Endothelial cell of umbilical vein (primary cell): ENCODE measurements at regions of chr1 and their contacts with region 1.

Region 1: GRCh38 chr1:66996018-66996682 is 57.8 kb downstream of the SLC35D1 start:
- DNase-seq: peak; percentile 83
- H3K4me3 ChIP-seq: no peak overlapping the region
- H3K27ac ChIP-seq: no peak overlapping the region
- H3K4me1 ChIP-seq: no peaks in the 10 kb centered on the region
- H3K27me3 ChIP-seq: no peaks in the 10 kb centered on the region
- CTCF ChIP-seq: peak; percentile 74 to 75
- POLR2A ChIP-seq: no peak

Region 2: DNA sequence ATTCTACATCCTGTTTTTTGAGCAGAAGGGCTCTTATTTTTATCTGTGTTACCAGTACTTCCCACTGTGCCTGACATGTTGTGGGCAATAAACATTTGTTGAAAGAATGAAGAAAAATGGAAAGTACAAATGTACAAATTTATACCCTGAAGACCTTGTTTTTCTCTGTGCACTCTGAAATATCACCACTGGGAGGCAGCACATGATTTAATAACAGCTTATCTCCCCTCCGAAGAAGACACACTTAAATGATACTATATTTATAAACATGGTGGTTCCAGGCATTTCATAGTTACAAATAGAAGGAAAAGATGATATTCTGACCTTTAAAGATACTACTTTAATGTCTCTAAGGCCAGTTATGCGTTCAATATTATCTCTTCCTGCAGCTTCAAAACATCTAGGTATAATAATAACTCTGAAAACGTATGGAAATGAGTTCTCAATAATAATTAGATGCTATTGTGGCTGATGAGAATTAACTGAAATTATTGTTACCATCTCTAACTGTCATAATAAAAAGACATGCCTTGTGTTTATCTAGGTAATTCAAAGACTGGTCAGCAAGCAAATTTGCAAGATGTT is 231.1 kb before region 1 on chr1:
- CTCF ChIA-PET with region 1: interaction called, 26 read pairs
- POLR2A ChIA-PET with region 1: no interaction called
- dilution Hi-C with region 1: no loop called
- intact Hi-C with region 1: loop called (anchors 5 kb)
- DNase-seq: peak; percentile 79
- H3K4me3 ChIP-seq: no peak overlapping the region
- H3K27ac ChIP-seq: no peak overlapping the region
- H3K4me1 ChIP-seq: no peaks in the 10 kb centered on the region
- H3K27me3 ChIP-seq: no peaks in the 10 kb centered on the region
- CTCF ChIP-seq: peak; percentile 48 to 54
- POLR2A ChIP-seq: no peak

Region 3: GRCh38 chr1:66981679-66982078 is 14.5 kb before region 1 on chr1:
- CTCF ChIA-PET with region 1: interaction called, 15 read pairs
- POLR2A ChIA-PET with region 1: no interaction called
- dilution Hi-C with region 1: no loop called
- intact Hi-C with region 1: no loop called
- DNase-seq: no peak
- H3K4me3 ChIP-seq: no peak overlapping the region
- H3K27ac ChIP-seq: no peak overlapping the region
- H3K4me1 ChIP-seq: no peaks in the 10 kb centered on the region
- H3K27me3 ChIP-seq: no peaks in the 10 kb centered on the region
- CTCF ChIP-seq: no peak
- POLR2A ChIP-seq: no peak

Region 4: GRCh38 chr1:67013573-67013972 is 17.4 kb after region 1 on chr1:
- CTCF ChIA-PET with region 1: interaction called, 27 read pairs
- POLR2A ChIA-PET with region 1: no interaction called
- dilution Hi-C with region 1: no loop called
- intact Hi-C with region 1: no loop called
- DNase-seq: no peak
- H3K4me3 ChIP-seq: no peak overlapping the region
- H3K27ac ChIP-seq: no peak overlapping the region
- H3K4me1 ChIP-seq: no peaks in the 10 kb centered on the region
- H3K27me3 ChIP-seq: no peaks in the 10 kb centered on the region
- CTCF ChIP-seq: no peak
- POLR2A ChIP-seq: no peak

Region 5: DNA sequence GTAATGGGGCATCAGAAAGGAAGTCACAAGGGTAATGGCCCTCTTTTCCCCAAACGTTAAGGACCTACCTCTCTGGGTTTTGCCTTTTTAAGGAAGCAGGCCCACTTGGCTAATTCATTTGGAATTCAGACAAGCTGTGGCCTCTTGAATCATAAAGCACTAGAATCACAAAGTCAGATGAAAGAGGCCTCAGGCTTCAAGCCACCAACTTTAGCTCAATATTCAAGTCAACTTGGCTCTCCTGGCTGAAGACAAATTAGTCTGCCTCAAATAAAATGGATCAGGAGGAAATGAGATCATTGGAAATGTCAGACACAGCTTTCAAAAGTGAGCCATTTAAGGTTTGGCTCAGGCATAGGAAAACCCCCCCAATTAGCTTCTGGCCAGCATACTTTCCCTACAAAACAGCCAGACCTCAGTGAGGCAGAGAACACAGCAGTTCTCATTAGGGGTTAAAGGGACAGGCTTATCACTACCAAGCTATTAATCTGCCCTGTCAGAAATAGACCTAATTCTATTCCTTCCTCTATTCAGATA is 23.5 kb after region 1 on chr1:
- CTCF ChIA-PET with region 1: interaction called, 27 read pairs
- POLR2A ChIA-PET with region 1: no interaction called
- dilution Hi-C with region 1: no loop called
- intact Hi-C with region 1: no loop called
- DNase-seq: peak; percentile 87
- H3K4me3 ChIP-seq: no peak overlapping the region
- H3K27ac ChIP-seq: peak overlapping the region; percentile 59
- H3K4me1 ChIP-seq: peaks cover 18% of the 10 kb centered on the region
- H3K27me3 ChIP-seq: no peaks in the 10 kb centered on the region
- CTCF ChIP-seq: no peak
- POLR2A ChIP-seq: no peak

Region 6: DNA sequence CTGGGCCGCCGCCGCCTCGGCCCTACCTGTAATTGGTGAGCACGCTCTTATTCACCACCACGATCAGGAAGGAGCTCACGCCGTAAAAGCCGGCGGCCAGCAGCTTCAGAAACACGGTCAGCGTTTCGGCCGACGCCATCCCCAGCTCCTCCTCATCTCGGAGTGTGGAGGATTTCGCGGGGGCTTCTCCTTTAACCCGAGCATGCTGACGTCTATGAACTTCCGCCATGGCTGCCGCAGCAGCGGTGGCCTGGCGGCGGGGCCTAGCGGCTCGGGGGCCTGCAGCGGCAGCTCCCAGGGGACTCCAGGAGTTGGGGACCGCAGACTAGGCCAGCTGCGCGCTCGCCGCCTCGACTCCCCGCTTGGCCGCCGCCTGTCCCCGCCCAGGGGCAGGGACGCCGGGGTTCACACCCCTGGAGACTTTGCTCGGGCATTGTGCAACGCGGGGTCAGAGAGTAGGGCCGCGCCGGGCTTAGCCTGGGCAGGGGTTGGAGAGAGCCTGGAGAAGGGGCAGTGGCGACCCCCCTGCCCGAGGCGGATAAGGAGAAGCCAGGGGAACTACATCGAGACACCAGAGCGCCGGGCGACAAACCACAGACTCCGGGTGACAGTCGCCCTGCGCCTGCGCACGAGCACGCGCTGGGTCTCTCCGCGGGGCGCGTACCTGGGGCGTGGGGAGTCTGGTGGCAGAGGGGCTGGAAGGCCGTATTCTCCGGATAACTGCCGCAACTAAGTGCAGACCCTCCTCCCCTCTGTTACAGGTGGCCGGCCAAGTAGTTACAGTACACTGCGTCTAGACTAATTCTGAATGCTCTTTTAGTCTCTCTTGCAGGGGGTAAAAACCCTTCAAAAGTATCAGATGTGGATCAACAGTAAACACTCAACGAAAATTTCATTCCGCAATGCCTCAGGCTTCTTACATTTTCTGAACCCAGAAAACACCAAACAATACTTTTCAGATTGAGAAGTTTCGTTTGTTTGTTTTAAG is 57.9 kb after region 1 on chr1 and contains the start of gene SLC35D1:
- CTCF ChIA-PET with region 1: interaction called, 21 read pairs
- POLR2A ChIA-PET with region 1: interaction called, 4 read pairs
- dilution Hi-C with region 1: no loop called
- intact Hi-C with region 1: loop called (anchors 2 kb)
- DNase-seq: peak; percentile 80
- H3K4me3 ChIP-seq: peak within 1 kb of the TSS; percentile 72 to 83 (median 81)
- H3K27ac ChIP-seq: peak within 1 kb of the TSS; percentile 74
- H3K4me1 ChIP-seq: peaks cover 13% of the 10 kb centered on the region
- H3K27me3 ChIP-seq: no peaks in the 10 kb centered on the region
- CTCF ChIP-seq: no peak
- POLR2A ChIP-seq: peak; percentile 81
- total RNA-seq, gene SLC35D1: 6.1 and 6.6 TPM in 2 replicates

Region 7: DNA sequence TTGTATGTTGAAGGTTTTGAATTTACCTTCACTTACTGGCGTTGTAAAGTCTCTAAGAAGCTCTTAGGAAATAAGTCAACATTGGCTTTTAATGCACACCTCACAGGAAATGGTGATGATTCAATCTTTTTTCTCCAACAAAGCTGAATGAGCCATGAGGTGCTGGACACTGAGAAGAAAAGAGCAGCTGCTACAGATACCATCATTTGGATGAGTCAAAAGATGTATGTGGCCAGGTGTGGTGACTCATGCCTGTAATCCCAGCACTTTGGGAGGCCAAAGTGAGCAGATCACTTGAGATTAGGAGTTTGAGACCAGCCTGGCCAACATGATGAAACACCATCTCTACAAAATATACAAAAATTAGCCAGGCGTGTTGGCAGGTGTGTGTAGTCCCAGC is 166.8 kb after region 1 on chr1:
- CTCF ChIA-PET with region 1: interaction called, 11 read pairs
- POLR2A ChIA-PET with region 1: no interaction called
- dilution Hi-C with region 1: no loop called
- intact Hi-C with region 1: no loop called
- DNase-seq: peak; percentile 11
- H3K4me3 ChIP-seq: no peak overlapping the region
- H3K27ac ChIP-seq: no peak overlapping the region
- H3K4me1 ChIP-seq: no peaks in the 10 kb centered on the region
- H3K27me3 ChIP-seq: peaks cover 0 to 2% of the 10 kb centered on the region in 2 experiments
- CTCF ChIP-seq: no peak
- POLR2A ChIP-seq: no peak